ENCODE measurements at regions of chr12 and their contacts with region 1.

Region 1: GRCh38 chr12:20183563-20183962 is 184.8 kb upstream of the PDE3A start:
- DNase-seq: no peak
- H3K4me3 ChIP-seq: no peak overlapping the region
- H3K27ac ChIP-seq: no peak overlapping the region
- H3K4me1 ChIP-seq: peaks cover 3 to 7% of the 10 kb centered on the region in 2 donors
- H3K27me3 ChIP-seq: no peaks in the 10 kb centered on the region
- CTCF ChIP-seq: no peak

Region 2: DNA sequence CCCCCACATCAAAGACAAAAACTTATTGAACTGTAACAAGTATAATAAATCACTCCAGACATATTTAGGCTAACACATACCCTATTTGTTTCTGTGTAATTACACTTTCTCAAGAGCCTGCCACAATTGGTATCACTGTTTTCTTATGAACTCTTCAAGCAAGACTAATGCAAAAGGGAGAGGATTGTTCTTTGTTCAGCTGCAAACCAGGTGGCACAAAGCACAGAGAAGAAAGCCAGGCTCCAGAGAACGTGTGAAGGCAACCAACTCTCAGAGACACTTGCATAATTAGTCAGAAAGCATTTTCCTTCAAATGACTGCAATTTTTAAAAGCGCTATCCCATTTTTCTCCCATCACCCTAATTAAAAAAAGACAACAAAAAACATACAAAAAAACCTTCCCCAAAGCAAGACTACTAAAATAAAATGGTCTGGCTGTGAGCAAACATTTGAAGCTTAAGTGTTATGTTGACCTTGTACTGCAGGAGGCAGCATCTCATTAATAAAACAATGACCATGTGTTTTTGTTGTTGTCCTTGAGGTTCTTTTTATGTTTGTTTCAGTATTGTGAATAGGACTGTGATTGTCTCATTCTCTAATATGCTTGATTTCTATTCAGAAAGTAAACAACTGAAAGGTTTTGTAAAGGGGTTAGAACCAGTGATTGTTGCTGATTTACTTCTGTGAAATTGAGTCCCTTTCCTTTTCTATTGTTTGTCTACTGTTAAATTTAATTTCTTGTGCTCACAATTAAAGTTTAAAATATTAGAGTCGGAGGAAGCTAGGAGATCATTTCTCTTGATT is 268.0 kb before region 1 on chr12:
- intact Hi-C with region 1: loop called (anchors 10 kb)
- DNase-seq: no peak
- H3K4me3 ChIP-seq: no peak overlapping the region
- H3K27ac ChIP-seq: peak overlapping the region; percentile 7 to 47
- H3K4me1 ChIP-seq: peaks cover 0 to 35% of the 10 kb centered on the region in 2 donors
- H3K27me3 ChIP-seq: no peaks in the 10 kb centered on the region
- CTCF ChIP-seq: peak; percentile 54 to 57 (median 56)